ENCODE measurements at regions of chr10 and their contacts with region 1.

Region 1: DNA sequence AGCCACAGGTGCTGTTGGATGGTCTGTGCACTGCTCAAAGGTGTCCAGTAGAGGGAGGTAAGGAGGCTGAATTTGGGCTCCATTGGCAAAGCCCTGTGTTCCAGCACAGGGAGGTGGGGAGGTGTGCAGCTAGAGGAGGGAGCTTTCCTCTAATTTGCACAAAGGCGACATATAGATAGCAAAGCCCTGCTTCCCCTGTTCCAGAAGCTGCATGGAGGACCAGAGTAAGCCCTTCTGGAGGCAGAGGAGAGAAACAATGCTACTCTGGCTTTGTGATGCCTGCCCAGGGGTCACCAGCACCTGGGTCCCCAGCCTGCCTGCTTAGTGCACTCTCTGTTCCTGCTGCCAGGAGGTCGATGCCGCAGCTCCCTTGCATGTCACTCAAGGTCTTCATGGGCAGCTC is 3.4 kb upstream of the ARHGAP22 start:
- DNase-seq: peak; percentile 73
- ATAC-seq: peak; percentile 93
- H3K4me3 Mint-ChIP-seq: no peak overlapping the region
- H3K27ac Mint-ChIP-seq: no peak overlapping the region
- H3K4me1 Mint-ChIP-seq: peaks cover 25% of the 10 kb centered on the region
- H3K27me3 Mint-ChIP-seq: peaks cover 41% of the 10 kb centered on the region
- CTCF ChIP-seq: peak; percentile 76

Region 2: DNA sequence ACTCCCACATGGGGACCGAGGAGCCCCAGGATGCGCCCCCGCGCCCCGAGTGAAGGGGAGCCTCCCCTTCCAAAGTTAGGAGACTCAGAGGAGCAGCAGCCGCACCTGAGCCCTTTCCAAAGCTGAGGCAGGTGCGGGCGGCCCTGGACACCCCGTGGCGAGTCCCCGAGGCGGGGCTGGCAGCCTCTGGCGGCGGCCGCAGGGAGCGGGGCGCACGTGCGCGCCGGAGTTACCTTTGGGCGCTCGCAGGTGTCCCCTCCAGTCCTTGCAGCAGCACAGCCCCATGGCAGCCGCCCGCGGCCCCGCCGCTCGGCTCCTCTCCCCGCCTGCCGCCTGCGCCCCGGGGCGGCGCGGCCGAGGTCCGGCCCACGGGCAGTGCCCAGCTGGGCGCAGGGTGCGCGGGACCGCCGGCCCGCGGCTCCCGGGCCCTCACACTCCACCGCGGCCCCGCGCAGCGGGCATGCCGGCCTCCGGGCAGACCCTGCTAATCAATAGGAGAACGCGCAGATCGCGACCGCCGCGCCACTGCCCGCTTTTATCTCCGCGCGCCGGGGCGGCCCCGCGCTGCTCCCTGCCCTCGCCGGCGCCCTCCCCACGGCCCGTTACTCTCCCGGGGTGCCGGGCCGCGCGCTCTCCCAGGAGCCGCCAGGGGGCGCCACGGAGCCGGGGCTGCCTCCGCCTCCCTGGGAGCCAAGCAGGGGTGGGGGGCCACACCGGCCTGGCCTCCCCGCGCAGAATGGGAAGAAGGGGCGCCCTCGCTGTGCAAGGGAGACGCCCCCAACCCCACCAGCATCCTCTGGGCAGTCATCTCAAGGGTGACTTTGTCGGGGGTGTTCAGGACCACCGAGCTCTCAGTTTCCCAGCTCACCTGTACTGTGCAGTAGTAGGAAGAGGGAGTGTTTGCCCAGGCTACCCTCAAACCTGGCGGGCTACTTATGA is 84.2 kb before region 1 on chr10:
- CTCF ChIA-PET with region 1: interaction called, 17 read pairs
- POLR2A ChIA-PET with region 1: no interaction called
- DNase-seq: peak; percentile 73
- ATAC-seq: peak; percentile 61
- H3K4me3 Mint-ChIP-seq: peak overlapping the region; percentile 56
- H3K27ac Mint-ChIP-seq: no peak overlapping the region
- H3K4me1 Mint-ChIP-seq: peaks cover 37% of the 10 kb centered on the region
- H3K27me3 Mint-ChIP-seq: peaks cover 11% of the 10 kb centered on the region
- CTCF ChIP-seq: peak; percentile 90

Region 3: DNA sequence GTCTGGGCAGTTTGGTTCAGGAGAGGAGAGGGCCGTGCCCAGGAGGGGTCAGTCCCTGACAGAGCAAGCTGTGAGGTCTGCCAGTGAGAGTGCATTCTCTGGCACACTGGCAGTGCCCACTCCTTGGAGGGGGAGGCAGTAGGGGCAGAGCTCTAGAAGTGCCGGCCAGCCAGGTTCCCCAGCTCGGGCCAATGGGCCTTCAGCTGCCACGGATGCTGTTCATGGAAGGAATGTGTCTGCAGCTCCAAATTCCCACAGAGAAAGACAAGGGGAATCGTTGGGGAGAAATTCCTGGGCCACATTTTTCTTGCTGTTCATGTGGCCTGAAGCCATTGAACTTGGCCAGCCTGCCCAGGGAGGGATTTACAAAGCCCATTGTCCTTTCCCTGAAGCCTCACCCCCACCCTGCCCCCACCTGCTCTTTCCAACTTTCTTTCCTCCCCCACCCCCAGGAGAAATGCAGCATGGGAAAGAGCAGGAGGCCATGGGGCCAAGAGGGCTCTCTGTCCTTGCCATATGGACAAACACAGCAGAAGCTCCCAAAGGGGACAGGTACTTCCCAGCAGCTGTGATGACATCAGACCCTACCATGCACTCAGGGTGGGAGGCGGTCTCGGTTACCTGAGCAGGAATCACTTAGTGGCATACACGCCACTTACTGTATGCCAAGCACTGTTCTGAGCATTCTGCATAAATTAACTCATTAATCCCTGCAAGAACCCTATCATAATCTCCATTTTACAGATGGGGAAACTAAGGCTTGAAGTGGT is 74.1 kb before region 1 on chr10:
- CTCF ChIA-PET with region 1: interaction called, 15 read pairs
- POLR2A ChIA-PET with region 1: no interaction called
- DNase-seq: peak; percentile 46
- ATAC-seq: peak; percentile 38
- H3K4me3 Mint-ChIP-seq: no peak overlapping the region
- H3K27ac Mint-ChIP-seq: peak overlapping the region; percentile 80
- H3K4me1 Mint-ChIP-seq: peaks cover 54% of the 10 kb centered on the region
- H3K27me3 Mint-ChIP-seq: no peaks in the 10 kb centered on the region; the same call in 1 of the 2 replicates
- CTCF ChIP-seq: no peak

Region 4: DNA sequence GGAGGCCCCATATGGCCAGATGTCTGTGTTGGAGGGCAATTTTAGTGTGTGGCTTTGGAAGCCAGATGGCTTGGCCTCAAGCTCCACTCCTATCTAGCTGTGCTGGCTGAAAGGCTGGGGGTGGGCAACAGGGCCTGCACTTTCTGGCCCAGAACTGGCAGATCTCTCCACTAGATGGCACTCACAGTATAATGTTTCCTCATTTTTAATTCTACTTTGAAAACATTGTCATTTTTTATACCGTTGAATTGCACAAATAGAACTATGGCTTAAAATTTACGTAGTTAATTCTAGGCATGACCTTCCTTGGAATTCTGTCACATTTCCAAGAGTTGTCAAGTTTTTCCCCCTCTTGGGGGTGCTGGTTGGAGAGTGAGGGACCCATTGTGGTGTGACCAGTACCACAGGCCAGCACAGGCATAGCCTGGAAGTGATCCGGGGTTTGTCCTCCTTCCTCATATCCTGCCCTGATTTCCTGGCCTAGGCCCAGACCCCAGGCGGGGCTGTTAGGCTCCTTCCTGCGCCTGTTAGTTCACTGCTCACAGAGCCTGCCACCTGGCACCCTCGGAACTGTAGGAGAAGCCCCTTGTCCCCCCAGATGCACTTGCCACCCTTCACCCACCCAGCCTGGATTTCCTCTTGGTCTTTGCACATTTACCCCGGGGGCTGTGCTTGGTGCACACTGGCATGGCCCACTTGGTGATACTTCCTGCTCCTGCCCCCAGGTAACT is 56.3 kb before region 1 on chr10:
- CTCF ChIA-PET with region 1: interaction called, 29 read pairs
- POLR2A ChIA-PET with region 1: no interaction called
- DNase-seq: peak; percentile 43
- ATAC-seq: peak; percentile 76
- H3K4me3 Mint-ChIP-seq: no peak overlapping the region
- H3K27ac Mint-ChIP-seq: no peak overlapping the region
- H3K4me1 Mint-ChIP-seq: peaks cover 2% of the 10 kb centered on the region; the same call in 1 of the 2 replicates
- H3K27me3 Mint-ChIP-seq: no peaks in the 10 kb centered on the region
- CTCF ChIP-seq: no peak

Region 5: GRCh38 chr10:48579251-48579960 is 28.9 kb before region 1 on chr10:
- CTCF ChIA-PET with region 1: interaction called, 15 read pairs
- POLR2A ChIA-PET with region 1: no interaction called
- DNase-seq: no peak
- ATAC-seq: peak; percentile 22
- H3K4me3 Mint-ChIP-seq: no peak overlapping the region
- H3K27ac Mint-ChIP-seq: no peak overlapping the region
- H3K4me1 Mint-ChIP-seq: peaks cover 12% of the 10 kb centered on the region
- H3K27me3 Mint-ChIP-seq: no peaks in the 10 kb centered on the region
- CTCF ChIP-seq: no peak

Region 6: DNA sequence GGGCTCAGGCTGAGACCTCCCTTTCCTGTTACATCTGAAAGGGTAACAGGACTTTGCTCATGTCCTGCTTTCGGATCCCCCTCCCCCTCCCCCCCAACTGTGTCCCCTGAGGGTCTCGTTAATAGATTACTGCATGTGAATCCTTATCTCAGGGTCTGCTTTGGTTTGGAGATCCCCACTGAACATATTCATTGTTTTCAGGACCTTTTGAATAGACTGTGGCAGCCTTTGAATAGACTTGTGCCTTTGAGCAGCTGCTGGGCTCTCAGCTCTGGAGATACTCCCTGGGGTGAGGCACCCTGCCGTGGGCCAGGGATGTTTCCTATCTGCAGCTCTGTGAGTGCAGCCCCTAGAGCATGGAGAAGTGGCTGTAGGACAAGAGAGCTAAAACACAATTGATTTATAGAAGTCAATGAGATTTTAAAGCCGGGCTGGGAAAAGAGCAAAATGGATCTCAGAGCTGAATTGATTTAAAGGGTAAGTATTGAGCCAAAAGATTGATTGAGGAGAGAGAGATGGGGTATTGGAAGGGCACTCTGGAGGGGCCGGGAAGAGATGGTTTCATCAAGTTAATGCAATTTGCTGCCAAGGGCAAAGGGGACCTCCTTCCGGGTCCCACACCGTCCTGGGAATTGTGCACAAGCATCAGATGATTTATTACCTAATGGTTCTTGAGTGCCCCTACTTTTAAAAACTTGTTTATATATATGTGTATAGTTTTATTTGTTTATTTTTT is 13.3 kb before region 1 on chr10:
- CTCF ChIA-PET with region 1: interaction called, 17 read pairs
- POLR2A ChIA-PET with region 1: no interaction called
- DNase-seq: peak; percentile 40
- ATAC-seq: peak; percentile 54
- H3K4me3 Mint-ChIP-seq: peak overlapping the region; percentile 11; the same call in 1 of the 2 replicates
- H3K27ac Mint-ChIP-seq: no peak overlapping the region; the same call in 1 of the 2 replicates
- H3K4me1 Mint-ChIP-seq: peaks cover 23% of the 10 kb centered on the region
- H3K27me3 Mint-ChIP-seq: peaks cover 3% of the 10 kb centered on the region
- CTCF ChIP-seq: no peak

Region 7: DNA sequence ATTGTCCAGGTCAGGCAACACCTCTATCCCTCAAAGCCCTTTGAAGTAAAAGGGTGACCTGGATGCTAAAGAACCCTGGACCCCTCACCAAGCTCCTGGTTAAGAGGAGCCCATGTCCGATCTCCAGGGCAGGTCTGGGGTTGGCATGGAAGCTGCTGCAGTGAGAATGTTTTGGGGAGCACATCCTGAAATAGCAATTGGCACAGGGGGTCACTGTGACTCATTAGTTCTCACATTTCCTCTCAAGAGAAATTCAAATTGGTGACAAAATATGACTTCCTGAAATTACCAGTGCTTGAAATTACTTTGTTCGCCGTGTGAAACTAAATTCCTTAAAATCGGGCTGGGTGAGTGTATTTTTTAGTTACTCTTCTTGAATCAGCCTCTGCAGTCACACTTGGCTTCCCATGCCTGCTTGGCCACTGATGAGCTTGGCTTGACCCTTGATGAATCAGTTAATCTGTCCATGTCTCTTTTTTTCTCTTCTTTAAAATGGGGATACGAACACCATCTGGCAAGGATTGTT is 15.4 kb after region 1 on chr10:
- CTCF ChIA-PET with region 1: interaction called, 16 read pairs
- POLR2A ChIA-PET with region 1: no interaction called
- DNase-seq: no peak
- ATAC-seq: no peak
- H3K4me3 Mint-ChIP-seq: no peak overlapping the region
- H3K27ac Mint-ChIP-seq: no peak overlapping the region
- H3K4me1 Mint-ChIP-seq: peaks cover 9% of the 10 kb centered on the region
- H3K27me3 Mint-ChIP-seq: no peaks in the 10 kb centered on the region
- CTCF ChIP-seq: no peak

Measured in WTC11 (cell line).